Sigmoid colon (tissue), 7 donors: ENCODE measurements at regions of chr20 and their contacts with region 1.

Region 1: GRCh38 chr20:21571841-21572690 is 58.2 kb upstream of the NKX2-2 start:
- DNase-seq: no peak
- H3K4me3 ChIP-seq: no peak overlapping the region
- H3K27ac ChIP-seq: no peak overlapping the region
- H3K4me1 ChIP-seq: no peaks in the 10 kb centered on the region
- H3K27me3 ChIP-seq: peaks cover 0 to 12% (median 0%) of the 10 kb centered on the region in 3 donors
- CTCF ChIP-seq: peak in 3 of 4 experiments; percentile 50 to 88 (median 65)
- EP300 ChIP-seq: no peak
- POLR2A ChIP-seq: no peak

Region 2: DNA sequence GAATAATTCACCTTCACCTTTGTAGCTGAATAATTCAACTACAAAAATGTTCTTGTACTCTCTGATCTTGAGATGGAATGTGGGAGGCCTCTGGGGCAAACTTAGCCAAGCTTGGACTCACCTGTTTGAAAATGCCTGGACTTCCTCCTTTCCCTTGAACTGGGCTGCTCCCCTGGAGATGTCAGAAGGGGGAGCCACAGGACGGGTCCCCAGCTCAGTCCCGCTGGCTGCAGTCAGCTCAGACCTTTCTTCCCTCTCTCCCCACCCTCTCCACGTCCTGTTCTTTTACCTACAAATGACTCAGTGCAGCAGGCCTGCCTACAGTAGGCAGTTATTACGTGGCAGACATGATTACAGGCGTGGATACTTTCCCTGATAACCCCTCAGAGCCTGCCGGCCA is 728.1 kb before region 1 on chr20:
- intact Hi-C with region 1: loop called (anchors 5 kb)
- DNase-seq: no peak
- H3K4me3 ChIP-seq: no peak overlapping the region
- H3K27ac ChIP-seq: no peak overlapping the region
- H3K4me1 ChIP-seq: no peaks in the 10 kb centered on the region
- H3K27me3 ChIP-seq: no peaks in the 10 kb centered on the region
- CTCF ChIP-seq: no peak
- EP300 ChIP-seq: no peak
- POLR2A ChIP-seq: no peak

Region 3: GRCh38 chr20:20860078-20860806 is 711.8 kb before region 1 on chr20:
- intact Hi-C with region 1: loop called (anchors 5 kb)
- DNase-seq: peak; percentile 88
- H3K4me3 ChIP-seq: no peak overlapping the region
- H3K27ac ChIP-seq: no peak overlapping the region
- H3K4me1 ChIP-seq: no peaks in the 10 kb centered on the region
- H3K27me3 ChIP-seq: peaks cover 0 to 22% (median 4%) of the 10 kb centered on the region in 3 donors
- CTCF ChIP-seq: peak; percentile 77 to 92 (median 86)
- EP300 ChIP-seq: no peak
- POLR2A ChIP-seq: no peak

Region 4: GRCh38 chr20:21373436-21373835 is 198.6 kb before region 1 on chr20:
- intact Hi-C with region 1: no loop called
- DNase-seq: no peak
- H3K4me3 ChIP-seq: no peak overlapping the region
- H3K27ac ChIP-seq: no peak overlapping the region
- H3K4me1 ChIP-seq: peaks cover 0 to 3% (median 1%) of the 10 kb centered on the region in 4 donors
- H3K27me3 ChIP-seq: no peaks in the 10 kb centered on the region
- CTCF ChIP-seq: no peak
- EP300 ChIP-seq: no peak
- POLR2A ChIP-seq: no peak

Region 5: GRCh38 chr20:21615617-21616080 is 43.6 kb after region 1 on chr20:
- intact Hi-C with region 1: no loop called
- DNase-seq: no peak
- H3K4me3 ChIP-seq: no peak overlapping the region
- H3K27ac ChIP-seq: no peak overlapping the region
- H3K4me1 ChIP-seq: no peaks in the 10 kb centered on the region
- H3K27me3 ChIP-seq: peaks cover 0 to 21% (median 0%) of the 10 kb centered on the region in 3 donors
- CTCF ChIP-seq: peak in 3 of 4 experiments; percentile 31 to 48 (median 32)
- EP300 ChIP-seq: no peak
- POLR2A ChIP-seq: no peak

Region 6: GRCh38 chr20:21665687-21666446 is 93.8 kb after region 1 on chr20:
- intact Hi-C with region 1: no loop called
- DNase-seq: no peak
- H3K4me3 ChIP-seq: no peak overlapping the region
- H3K27ac ChIP-seq: no peak overlapping the region
- H3K4me1 ChIP-seq: no peaks in the 10 kb centered on the region
- H3K27me3 ChIP-seq: peaks cover 0 to 4% (median 0%) of the 10 kb centered on the region in 3 donors
- CTCF ChIP-seq: no peak
- EP300 ChIP-seq: no peak
- POLR2A ChIP-seq: no peak